Astrocyte of the cerebellum (primary cell): ENCODE measurements at regions of chr6 and their contacts with region 1.

Region 1: DNA sequence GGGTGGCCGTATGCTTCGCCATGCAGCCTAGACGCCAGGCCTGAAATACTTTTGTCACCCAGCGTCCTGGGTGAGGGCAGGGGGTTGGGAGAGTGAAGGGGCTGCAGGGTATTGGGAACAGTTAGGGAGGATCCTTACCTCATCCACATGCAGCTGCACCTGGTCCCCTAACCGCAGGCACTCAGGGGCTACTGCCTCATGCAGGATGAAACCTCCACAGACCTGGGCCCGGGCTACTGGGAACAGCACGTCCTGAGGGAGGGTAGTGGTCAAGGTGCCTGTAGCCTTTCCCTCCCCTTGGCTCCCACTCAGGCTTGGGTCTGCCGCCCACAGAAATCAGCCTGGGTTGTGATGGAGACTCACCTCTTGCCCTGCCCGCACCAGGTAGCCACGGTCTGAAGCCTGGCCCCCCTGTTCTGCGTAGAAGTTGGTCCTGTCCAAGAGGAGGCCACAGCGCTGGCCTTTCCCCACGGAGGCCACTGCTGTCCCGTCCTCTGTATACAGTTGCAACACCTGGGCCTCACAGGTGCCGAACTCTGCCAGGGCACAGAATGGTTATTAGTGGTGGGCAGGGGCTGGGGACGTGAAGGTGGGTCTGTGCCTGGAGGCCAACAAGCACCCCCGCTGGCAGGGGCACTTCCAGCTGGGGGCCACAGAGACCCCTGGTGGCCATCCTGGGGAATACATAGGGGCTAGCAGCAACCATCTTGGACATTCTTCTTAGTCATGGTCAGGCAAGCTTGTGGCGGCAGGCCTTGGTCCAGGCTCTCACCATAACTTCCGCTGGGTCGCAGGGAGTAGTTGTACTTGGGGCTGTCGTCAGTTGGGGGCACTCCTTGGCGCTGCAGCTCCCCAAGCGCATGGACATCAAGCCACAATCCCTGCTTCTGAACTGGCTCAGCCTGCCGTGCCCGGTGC is 8.6 kb downstream of the AARS2 start:
- DNase-seq: no peak
- H3K4me3 ChIP-seq: no peak overlapping the region
- CTCF ChIP-seq: peak; percentile 80

Region 2: DNA sequence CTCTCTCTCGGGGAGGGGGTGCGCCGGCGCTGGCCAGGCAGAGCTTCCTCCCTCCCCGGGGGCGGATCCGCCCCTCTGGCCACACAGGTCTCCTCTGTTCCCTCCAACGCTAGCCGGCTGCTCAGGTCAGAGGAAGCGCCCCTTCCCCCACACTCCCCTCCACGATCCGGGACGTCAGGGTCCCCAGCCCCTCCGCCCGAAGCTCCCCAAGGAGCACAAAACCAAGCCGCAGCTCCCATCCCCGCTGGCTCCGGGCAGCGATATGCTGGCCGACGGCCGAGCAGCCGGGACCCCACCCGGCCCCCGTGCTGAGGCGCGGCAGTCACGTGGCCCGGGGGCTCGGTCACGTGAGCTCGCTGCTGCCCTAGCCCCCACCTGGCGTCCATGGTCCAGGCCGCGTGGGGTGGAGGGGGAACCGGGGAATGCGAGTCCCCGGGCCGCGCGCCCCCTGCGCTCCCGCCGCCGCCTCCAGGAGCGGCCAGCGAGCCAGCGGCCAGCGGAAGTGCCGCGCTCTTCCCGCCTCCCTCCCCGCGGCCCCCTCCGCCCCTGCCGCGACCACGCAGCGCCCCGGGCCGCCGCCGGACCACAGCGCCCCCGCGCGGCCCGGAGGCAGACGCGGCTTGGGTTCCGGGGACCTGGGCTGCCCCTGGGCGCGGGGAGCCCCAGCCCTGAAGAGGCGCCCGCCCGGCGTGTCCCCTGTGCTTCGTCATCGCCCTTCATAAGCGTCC is 47.4 kb before region 1 on chr6 and contains the start of gene SLC35B2:
- in situ Hi-C with region 1: loop called (anchors 5 kb)
- DNase-seq: no peak
- H3K4me3 ChIP-seq: peak within 1 kb of the TSS; percentile 94
- CTCF ChIP-seq: peak; percentile 42

Region 3: GRCh38 chr6:44712353-44713111 is 408.0 kb after region 1 on chr6:
- in situ Hi-C with region 1: no loop called
- DNase-seq: peak; percentile 64
- H3K4me3 ChIP-seq: no peak overlapping the region
- CTCF ChIP-seq: no peak